Activated CD8-positive, alpha-beta T cell treated with anti-CD3 and anti-CD28 coated beads for 36 hours (primary cell): ENCODE measurements at regions of chr11 and their contacts with region 1.

Region 1: GRCh38 chr11:45110562-45110961 is 35.9 kb upstream of the PRDM11 start:
- DNase-seq: peak; percentile 48
- ATAC-seq: peak; percentile 67
- H3K4me3 Mint-ChIP-seq: no peak overlapping the region
- H3K27ac Mint-ChIP-seq: no peak overlapping the region
- H3K4me1 Mint-ChIP-seq: no peaks in the 10 kb centered on the region
- H3K27me3 Mint-ChIP-seq: peaks cover 27% of the 10 kb centered on the region
- CTCF ChIP-seq: peak; percentile 78

Region 2: GRCh38 chr11:45097721-45098493 is 12.7 kb before region 1 on chr11:
- CTCF ChIA-PET with region 1: interaction called, 27 read pairs
- POLR2A ChIA-PET with region 1: no interaction called
- intact Hi-C with region 1: no loop called
- DNase-seq: peak; percentile 56
- ATAC-seq: no peak
- H3K4me3 Mint-ChIP-seq: no peak overlapping the region
- H3K27ac Mint-ChIP-seq: no peak overlapping the region
- H3K4me1 Mint-ChIP-seq: peaks cover 22% of the 10 kb centered on the region
- H3K27me3 Mint-ChIP-seq: peaks cover 10% of the 10 kb centered on the region
- CTCF ChIP-seq: no peak

Region 3: GRCh38 chr11:45142241-45143055 is 31.9 kb after region 1 on chr11:
- CTCF ChIA-PET with region 1: interaction called, 16 read pairs
- POLR2A ChIA-PET with region 1: no interaction called
- intact Hi-C with region 1: no loop called
- DNase-seq: no peak
- ATAC-seq: no peak
- H3K4me3 Mint-ChIP-seq: no peak overlapping the region
- H3K27ac Mint-ChIP-seq: no peak overlapping the region
- H3K4me1 Mint-ChIP-seq: peaks cover 13% of the 10 kb centered on the region
- H3K27me3 Mint-ChIP-seq: peaks cover 28% of the 10 kb centered on the region
- CTCF ChIP-seq: no peak

Region 4: GRCh38 chr11:45252134-45252855 is 141.7 kb after region 1 on chr11:
- CTCF ChIA-PET with region 1: interaction called, 11 read pairs
- POLR2A ChIA-PET with region 1: no interaction called
- intact Hi-C with region 1: no loop called
- DNase-seq: peak; percentile 54
- ATAC-seq: peak; percentile 72
- H3K4me3 Mint-ChIP-seq: no peak overlapping the region
- H3K27ac Mint-ChIP-seq: no peak overlapping the region
- H3K4me1 Mint-ChIP-seq: no peaks in the 10 kb centered on the region
- H3K27me3 Mint-ChIP-seq: peaks cover 12% of the 10 kb centered on the region
- CTCF ChIP-seq: peak; percentile 66

Region 5: DNA sequence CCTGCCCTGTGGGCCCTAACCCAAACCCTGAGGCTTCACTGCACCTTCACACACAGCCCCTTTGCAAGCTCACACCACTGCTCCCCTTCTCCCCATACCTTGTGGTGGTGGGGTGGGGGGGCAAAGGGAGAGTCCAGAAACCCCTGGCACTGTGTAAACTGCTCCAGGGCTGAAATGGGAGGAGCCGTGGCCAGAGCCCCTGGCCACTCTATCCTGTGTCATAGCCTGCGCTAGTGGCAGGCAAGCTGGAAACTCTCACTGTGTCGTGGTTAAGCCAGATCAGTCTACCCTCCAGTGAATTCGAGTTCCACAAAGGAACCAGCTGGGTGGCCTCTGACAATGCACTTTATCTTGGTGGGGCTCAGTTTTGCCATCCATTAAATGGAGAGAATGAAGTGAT is 183.9 kb after region 1 on chr11:
- CTCF ChIA-PET with region 1: interaction called, 35 read pairs
- POLR2A ChIA-PET with region 1: no interaction called
- intact Hi-C with region 1: loop called (anchors 1 kb)
- DNase-seq: no peak
- ATAC-seq: no peak
- H3K4me3 Mint-ChIP-seq: no peak overlapping the region
- H3K27ac Mint-ChIP-seq: no peak overlapping the region
- H3K4me1 Mint-ChIP-seq: no peaks in the 10 kb centered on the region
- H3K27me3 Mint-ChIP-seq: peaks cover 34% of the 10 kb centered on the region
- CTCF ChIP-seq: no peak

Region 6: GRCh38 chr11:45332276-45332934 is 221.8 kb after region 1 on chr11:
- CTCF ChIA-PET with region 1: interaction called, 101 read pairs
- POLR2A ChIA-PET with region 1: no interaction called
- intact Hi-C with region 1: loop called (anchors 1 kb)
- DNase-seq: peak; percentile 45
- ATAC-seq: peak; percentile 66
- H3K4me3 Mint-ChIP-seq: no peak overlapping the region
- H3K27ac Mint-ChIP-seq: no peak overlapping the region
- H3K4me1 Mint-ChIP-seq: no peaks in the 10 kb centered on the region
- H3K27me3 Mint-ChIP-seq: peaks cover 7% of the 10 kb centered on the region
- CTCF ChIP-seq: peak; percentile 91